BJ (cell line): ENCODE measurements at regions of chr12 and their contacts with region 1.

Region 1: GRCh38 chr12:31250179-31250578 is 75.8 kb downstream of the SINHCAF start:
- DNase-seq: no peak
- H3K4me3 ChIP-seq: no peak overlapping the region
- H3K27me3 ChIP-seq: no peaks in the 10 kb centered on the region
- CTCF ChIP-seq: no peak

Region 2: GRCh38 chr12:30308011-30308705 is 942.0 kb before region 1 on chr12:
- CTCF ChIA-PET with region 1: no interaction called
- POLR2A ChIA-PET with region 1: no interaction called
- DNase-seq: no peak
- H3K4me3 ChIP-seq: no peak overlapping the region
- H3K27me3 ChIP-seq: no peaks in the 10 kb centered on the region
- CTCF ChIP-seq: no peak

Region 3: DNA sequence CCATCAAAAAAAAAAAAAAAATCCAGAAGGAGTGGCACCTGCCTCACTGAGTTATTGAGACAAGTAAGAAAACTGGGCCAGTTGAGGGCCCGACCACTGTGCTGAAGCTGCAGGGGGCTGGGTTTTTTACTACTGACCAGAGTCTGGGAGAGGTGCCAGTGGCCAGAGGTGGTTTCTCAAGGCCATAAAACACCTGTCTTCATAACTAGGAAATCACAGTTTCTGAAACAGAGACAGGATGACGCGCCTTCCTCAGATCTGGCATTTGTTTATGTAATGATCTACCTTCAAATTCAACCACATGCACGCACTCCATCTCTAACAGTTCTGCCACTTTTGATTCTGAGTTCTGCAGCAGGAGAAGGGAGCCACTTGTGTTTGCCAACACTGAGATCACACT is 310.9 kb before region 1 on chr12:
- CTCF ChIA-PET with region 1: no interaction called
- POLR2A ChIA-PET with region 1: no interaction called
- DNase-seq: no peak
- H3K4me3 ChIP-seq: no peak overlapping the region
- H3K27me3 ChIP-seq: no peaks in the 10 kb centered on the region
- CTCF ChIP-seq: no peak

Region 4: DNA sequence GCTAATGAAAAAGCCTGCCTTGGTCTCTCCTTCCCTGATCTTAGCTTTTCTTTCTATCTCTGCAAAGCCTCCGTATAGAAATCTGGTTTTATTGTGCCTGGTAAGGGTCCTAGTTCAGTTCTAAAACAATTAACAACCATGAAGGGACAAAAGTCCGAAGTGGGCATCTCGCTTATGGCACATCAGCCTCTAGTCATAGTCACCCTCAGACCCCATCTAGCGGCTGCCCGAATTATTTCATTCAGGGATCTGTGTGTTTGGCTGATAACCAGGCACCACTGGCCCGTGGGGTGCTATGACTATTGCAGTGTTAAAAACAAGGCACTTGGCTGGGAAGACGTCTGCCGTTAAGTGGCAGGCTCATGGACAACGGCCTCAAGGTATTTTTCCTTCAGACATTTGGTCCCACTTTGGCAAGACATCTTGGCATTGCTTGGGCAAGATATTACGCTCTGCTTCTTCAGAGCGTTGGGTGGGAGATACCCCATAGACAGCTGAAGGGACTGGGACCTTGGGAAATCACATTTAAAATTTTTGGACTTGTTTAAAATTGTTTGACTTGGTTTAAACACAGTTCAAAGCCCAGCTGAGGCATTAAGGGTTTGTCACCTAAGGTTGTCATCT is 11.3 kb before region 1 on chr12:
- CTCF ChIA-PET with region 1: interaction called, 12 read pairs
- POLR2A ChIA-PET with region 1: no interaction called
- DNase-seq: no peak
- H3K4me3 ChIP-seq: no peak overlapping the region
- H3K27me3 ChIP-seq: peaks cover 9% of the 10 kb centered on the region
- CTCF ChIP-seq: peak; percentile 78